ENCODE measurements at regions of chr19 and their contacts with region 1.

Region 1: GRCh38 chr19:49631014-49631588 is 8.8 kb downstream of the RRAS start:
- DNase-seq: no peak
- ATAC-seq: no peak
- H3K4me3 ChIP-seq: no peak overlapping the region
- H3K27ac ChIP-seq: no peak overlapping the region
- H3K4me1 ChIP-seq: peaks cover 10% of the 10 kb centered on the region; the same call in 1 of the 2 replicates
- H3K27me3 ChIP-seq: no peaks in the 10 kb centered on the region
- CTCF ChIP-seq: no peak
- EP300 ChIP-seq: no peak
- POLR2A ChIP-seq: no peak
- RAD21 ChIP-seq: no peak

Region 2: DNA sequence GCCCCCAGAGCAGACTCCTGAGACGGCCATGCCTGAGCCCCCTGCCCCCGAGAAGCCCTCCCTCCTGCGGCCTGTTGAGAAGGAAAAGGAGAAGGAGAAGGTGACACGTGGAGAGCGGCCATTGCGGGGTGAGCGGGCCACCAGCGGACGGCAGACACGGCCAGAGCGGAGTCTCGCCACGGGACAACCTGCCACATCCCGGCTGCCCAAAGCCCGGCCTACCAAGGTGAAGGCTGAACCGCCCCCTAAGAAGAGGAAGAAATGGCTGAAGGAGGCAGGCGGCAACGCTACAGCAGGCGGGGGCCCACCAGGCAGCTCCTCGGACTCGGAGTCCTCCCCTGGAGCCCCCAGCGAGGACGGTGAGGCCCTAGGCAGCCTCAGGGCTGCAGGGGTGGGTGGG is 15.2 kb before region 1 on chr19:
- CTCF ChIA-PET with region 1: no interaction called
- POLR2A ChIA-PET with region 1: no interaction called
- in situ Hi-C with region 1: no loop called
- intact Hi-C with region 1: loop called (anchors 1 kb)
- DNase-seq: no peak
- ATAC-seq: no peak
- H3K4me3 ChIP-seq: no peak overlapping the region
- H3K27ac ChIP-seq: no peak overlapping the region
- H3K4me1 ChIP-seq: peaks cover 17% of the 10 kb centered on the region
- H3K27me3 ChIP-seq: no peaks in the 10 kb centered on the region
- CTCF ChIP-seq: no peak
- EP300 ChIP-seq: no peak
- POLR2A ChIP-seq: no peak
- RAD21 ChIP-seq: no peak

Region 3: DNA sequence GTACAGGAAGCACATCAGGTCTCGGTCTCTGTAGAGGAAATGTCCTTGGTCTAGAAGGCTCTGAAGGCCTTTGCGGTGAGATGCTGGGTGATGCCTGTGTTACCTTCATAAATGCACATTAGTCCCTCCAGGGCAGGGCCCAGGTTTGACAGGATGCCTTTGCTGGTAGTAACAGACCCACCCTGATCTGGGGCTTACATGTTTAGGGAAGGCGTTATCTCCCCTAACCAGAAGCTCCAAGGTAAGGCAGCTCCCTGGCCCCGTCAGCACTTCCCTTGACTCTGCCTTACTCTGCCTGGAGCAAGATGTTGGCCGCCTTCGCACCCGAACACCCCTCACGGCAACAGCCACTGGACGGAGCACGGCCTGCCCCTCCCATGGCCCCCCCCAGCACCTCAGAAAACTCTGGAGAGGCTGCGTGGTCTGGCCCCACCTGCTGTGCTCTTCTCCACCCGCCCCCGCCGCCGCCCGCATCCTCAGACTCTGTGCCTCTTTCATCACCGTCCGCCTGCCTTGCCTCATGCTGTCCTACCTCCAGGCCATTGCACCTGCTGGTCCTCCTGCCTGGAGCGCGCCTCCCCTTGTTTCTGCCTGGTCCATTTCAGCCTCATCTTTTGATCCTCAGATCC is 144.8 kb after region 1 on chr19:
- CTCF ChIA-PET with region 1: no interaction called
- POLR2A ChIA-PET with region 1: no interaction called
- in situ Hi-C with region 1: no loop called
- intact Hi-C with region 1: no loop called
- DNase-seq: no peak
- ATAC-seq: no peak
- H3K4me3 ChIP-seq: no peak overlapping the region
- H3K27ac ChIP-seq: no peak overlapping the region
- H3K4me1 ChIP-seq: peaks cover 19% of the 10 kb centered on the region
- H3K27me3 ChIP-seq: no peaks in the 10 kb centered on the region
- CTCF ChIP-seq: no peak
- EP300 ChIP-seq: no peak
- POLR2A ChIP-seq: no peak
- RAD21 ChIP-seq: no peak

Measured in HepG2 (cell line).